Vagina (tissue), 2 donors: ENCODE measurements at regions of chr7 and their contacts with region 1.

Region 1: GRCh38 chr7:129825496-129826267 is 127.1 kb downstream of the UBE2H start:
- DNase-seq: no peak
- H3K4me3 ChIP-seq: peak overlapping the region; percentile 64 to 70
- H3K27ac ChIP-seq: peak overlapping the region; percentile 70
- H3K4me1 ChIP-seq: peaks cover 11% of the 10 kb centered on the region
- H3K27me3 ChIP-seq: no peaks in the 10 kb centered on the region
- CTCF ChIP-seq: peak in 2 of 3 experiments; percentile 47 to 99
- POLR2A ChIP-seq: no peak

Region 2: GRCh38 chr7:129940329-129940728 is 114.6 kb after region 1 on chr7:
- intact Hi-C with region 1: no loop called
- DNase-seq: no peak
- H3K4me3 ChIP-seq: no peak overlapping the region
- H3K27ac ChIP-seq: no peak overlapping the region
- H3K4me1 ChIP-seq: peaks cover 20% of the 10 kb centered on the region
- H3K27me3 ChIP-seq: no peaks in the 10 kb centered on the region
- CTCF ChIP-seq: no peak
- POLR2A ChIP-seq: no peak

Region 3: DNA sequence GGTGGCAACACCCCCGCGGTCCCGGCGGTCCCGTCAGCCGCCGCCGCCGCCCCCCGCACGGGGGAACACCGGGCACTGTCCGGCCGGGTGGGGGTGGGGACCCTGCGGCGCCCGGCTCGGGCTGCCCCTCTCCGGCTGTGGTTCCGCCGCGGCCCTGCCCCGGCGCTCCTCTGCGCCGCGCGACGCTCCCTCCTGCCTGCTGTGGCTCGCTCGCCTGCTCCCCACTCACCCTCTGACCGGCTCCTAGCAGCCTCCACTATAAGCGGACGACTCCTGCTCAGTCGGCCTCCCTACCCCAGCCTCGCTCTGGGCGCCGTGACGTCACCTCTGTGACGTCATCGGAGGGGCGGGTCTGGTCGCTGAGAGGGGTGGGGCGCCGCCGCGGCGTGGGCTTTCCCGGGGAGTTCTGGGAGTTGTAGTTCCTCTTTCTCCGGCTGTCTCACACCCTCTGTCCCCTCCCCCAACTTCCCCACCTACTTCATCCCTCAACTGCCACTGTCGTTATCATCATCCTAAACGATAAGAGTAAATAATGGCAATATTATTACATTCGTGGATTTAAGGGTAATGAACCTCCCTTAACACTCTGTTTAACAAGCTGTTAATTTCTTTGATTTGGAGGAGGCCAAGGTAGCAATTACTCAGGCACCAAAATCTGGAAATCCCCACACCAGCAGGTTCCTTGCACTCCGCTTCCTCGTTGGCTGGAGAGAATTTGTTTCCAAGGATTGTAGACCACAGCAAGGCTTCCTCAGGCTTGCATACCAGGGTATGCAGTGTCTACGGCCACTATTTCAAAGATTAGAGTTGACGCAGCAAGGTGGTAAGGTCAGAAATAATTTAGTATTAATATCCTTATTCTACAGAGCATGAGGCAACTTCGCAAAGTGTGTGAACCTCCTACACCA is 127.2 kb after region 1 on chr7 and contains the start of gene UBE2H:
- intact Hi-C with region 1: loop called (anchors 10 kb)
- DNase-seq: no peak
- H3K4me3 ChIP-seq: peak within 1 kb of the TSS; percentile 69 to 92
- H3K27ac ChIP-seq: peak within 1 kb of the TSS; percentile 99
- H3K4me1 ChIP-seq: peaks cover 29% of the 10 kb centered on the region
- H3K27me3 ChIP-seq: no peaks in the 10 kb centered on the region
- CTCF ChIP-seq: peak in 1 of 3 experiments; percentile 10
- POLR2A ChIP-seq: peak; percentile 92 to 97
- total RNA-seq, gene UBE2H: 68.5 TPM

Region 4: DNA sequence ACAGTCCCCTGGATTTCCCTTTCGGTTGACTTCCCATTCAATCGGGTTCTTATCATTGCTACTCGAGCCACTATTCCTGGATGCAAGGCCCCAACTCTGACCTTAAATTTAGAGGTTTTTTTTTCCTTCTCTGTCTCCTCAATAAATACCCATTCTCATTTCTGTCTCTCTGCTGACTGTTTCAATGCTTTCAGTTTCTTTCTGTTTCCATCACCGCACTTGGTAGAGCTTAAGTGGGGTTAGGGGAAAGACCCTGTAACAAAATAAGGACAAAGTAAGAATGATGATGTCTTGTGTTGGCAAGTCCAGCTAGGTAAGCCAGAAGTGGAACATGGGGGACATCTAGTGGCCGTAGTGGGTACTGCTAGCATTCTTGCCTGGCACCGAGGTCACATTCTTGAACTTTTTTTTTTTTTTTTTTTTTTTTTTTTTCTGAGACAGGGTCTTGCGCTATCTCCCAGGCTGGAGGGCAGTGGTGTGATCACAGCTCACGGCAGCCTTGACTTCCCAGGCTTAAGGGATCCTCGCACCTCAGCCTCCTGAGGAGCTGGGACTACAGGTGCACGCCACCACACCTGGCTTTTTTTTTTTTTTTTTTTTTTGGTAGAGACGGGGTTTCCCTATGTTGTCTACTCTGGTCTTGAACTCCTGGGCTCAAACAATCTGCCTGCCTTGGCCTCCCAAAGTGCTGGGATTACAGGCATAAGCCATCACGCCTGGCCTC is 185.2 kb after region 1 on chr7:
- intact Hi-C with region 1: loop called (anchors 10 kb)
- DNase-seq: no peak
- H3K4me3 ChIP-seq: no peak overlapping the region
- H3K27ac ChIP-seq: no peak overlapping the region
- H3K4me1 ChIP-seq: no peaks in the 10 kb centered on the region
- H3K27me3 ChIP-seq: no peaks in the 10 kb centered on the region
- CTCF ChIP-seq: peak; percentile 75 to 95 (median 91)
- POLR2A ChIP-seq: no peak